ENCODE measurements at regions of chr10 and their contacts with region 1.

Region 1: DNA sequence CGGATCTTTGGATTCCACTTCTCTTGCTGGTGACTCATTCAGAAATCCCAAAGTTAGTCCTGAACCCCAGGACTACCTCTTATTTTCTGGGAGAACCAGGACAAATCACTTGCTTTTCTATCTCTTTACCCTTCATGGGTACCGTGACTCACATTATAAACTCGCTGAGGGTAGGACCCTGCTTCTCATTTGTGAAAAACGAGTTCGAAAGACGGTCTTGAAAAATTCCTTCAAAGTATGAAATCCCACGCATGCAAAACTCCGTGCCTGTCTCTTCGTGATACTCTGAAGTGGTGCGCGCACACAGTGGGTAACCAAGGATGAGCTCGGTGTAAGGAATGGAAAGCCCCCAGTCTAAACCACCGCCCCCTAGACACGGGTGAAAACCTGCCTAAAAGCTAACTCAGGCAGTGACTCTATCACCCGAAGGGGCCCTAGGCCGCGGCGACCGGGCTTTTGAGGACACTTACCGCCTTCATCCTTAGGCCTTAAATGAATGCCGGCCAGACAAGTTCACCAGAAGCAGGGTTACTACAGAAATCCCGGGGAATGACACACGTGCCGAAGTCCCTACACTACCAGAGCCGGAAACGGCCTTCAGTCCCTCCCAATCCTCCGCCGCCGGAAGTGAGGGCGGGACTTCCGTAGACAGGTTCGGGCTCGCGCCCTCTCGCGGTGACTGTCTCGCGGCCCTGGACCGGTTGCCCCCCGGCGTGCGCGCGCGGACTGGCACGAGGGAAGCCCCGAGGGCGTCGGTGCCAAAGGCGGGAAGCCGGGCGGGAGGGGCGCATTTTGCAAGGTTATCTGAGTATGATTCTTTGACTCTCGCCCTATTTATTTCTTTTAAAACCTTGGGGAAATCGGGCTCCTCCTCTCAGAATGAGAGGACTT is at the start of gene NOC3L:
- DNase-seq: peak; percentile 98
- ATAC-seq: peak; percentile 99 to 100
- total RNA-seq, gene NOC3L: 10.0 to 11.5 TPM

Region 2: DNA sequence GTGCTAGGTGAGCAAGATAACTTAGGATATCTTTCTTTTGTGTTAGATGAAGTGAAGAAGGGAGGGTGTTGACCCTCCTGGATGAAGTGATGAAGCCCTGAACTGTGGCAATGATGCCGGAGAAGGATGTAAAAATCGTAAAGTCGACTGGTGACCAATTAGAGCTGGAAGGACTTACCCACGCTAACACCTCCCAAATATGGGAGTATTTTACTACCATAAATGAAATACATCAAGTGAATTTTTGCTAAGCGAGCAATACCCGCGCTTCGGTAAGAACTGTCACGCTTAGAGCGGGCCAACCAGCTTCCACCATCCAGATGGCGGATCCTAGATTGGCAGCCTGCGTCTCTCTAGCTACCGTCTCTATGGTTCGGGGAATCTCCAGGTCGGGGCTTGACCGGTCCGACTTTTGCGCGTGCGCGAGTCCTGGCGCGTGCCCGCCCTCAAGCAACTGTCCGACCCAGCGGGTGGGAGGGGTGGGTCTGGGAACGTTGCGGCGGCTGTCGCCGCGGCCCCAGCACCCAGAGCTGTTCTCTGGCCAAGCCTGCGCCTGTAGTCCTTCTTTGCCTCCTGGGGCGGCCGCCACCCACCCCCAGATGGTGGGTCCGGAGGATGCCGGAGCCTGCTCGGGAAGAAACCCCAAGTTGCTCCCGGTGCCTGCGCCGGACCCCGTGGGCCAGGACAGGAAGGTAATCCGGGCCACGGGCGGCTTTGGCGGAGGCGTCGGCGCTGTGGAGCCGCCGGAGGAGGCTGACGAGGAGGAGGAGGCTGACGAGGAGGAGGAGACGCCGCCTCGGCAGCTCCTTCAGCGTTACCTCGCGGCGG is 39.6 kb after region 1 on chr10 and contains the start of gene TBC1D12:
- intact Hi-C with region 1: loop called (anchors 5 kb)
- DNase-seq: peak; percentile 97
- ATAC-seq: peak; percentile 97 to 98
- total RNA-seq, gene TBC1D12: 6.6 to 6.9 TPM

Measured in left cardiac atrium (tissue), 4 donors.